Calu3 (cell line): ENCODE measurements at regions of chrX and their contacts with region 1.

Region 1: GRCh38 chrX:28351801-28352200 is 235.4 kb upstream of the IL1RAPL1 start:
- DNase-seq: no peak
- H3K4me3 Mint-ChIP-seq: no peak overlapping the region
- H3K27ac Mint-ChIP-seq: no peak overlapping the region
- H3K4me1 Mint-ChIP-seq: no peaks in the 10 kb centered on the region
- H3K27me3 Mint-ChIP-seq: no peaks in the 10 kb centered on the region
- CTCF ChIP-seq: no peak

Region 2: GRCh38 chrX:28120076-28120475 is 231.7 kb before region 1 on chrX:
- CTCF ChIA-PET with region 1: no interaction called
- intact Hi-C with region 1: no loop called
- DNase-seq: peak; percentile 34
- H3K4me3 Mint-ChIP-seq: no peak overlapping the region
- H3K27ac Mint-ChIP-seq: peak overlapping the region; percentile 87
- H3K4me1 Mint-ChIP-seq: peaks cover 16% of the 10 kb centered on the region
- H3K27me3 Mint-ChIP-seq: no peaks in the 10 kb centered on the region
- CTCF ChIP-seq: no peak

Region 3: DNA sequence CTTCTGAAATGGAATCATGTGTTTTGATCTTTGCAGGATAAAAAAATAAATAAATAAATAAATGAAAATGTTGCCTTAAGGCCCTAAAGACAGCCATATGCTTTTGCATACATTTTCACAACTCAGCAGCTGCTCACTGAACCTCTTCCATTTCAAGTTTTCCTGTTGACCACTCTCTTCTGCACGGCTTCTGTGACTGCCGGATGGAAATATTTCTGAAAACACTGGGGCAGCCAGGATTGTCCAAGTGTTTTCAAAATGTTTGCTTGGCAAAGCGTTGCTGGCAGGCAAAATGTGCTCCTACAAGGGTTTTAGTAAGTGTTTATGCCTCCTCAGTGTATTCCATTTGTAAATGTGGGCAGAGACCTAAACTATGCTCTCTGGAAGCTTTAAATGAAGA is 27.3 kb after region 1 on chrX:
- CTCF ChIA-PET with region 1: no interaction called
- intact Hi-C with region 1: loop called (anchors 1 kb)
- DNase-seq: no peak
- H3K4me3 Mint-ChIP-seq: no peak overlapping the region
- H3K27ac Mint-ChIP-seq: no peak overlapping the region
- H3K4me1 Mint-ChIP-seq: no peaks in the 10 kb centered on the region
- H3K27me3 Mint-ChIP-seq: no peaks in the 10 kb centered on the region
- CTCF ChIP-seq: no peak